Endothelial cell of umbilical vein (primary cell): ENCODE measurements at regions of chr16 and their contacts with region 1.

Region 1: DNA sequence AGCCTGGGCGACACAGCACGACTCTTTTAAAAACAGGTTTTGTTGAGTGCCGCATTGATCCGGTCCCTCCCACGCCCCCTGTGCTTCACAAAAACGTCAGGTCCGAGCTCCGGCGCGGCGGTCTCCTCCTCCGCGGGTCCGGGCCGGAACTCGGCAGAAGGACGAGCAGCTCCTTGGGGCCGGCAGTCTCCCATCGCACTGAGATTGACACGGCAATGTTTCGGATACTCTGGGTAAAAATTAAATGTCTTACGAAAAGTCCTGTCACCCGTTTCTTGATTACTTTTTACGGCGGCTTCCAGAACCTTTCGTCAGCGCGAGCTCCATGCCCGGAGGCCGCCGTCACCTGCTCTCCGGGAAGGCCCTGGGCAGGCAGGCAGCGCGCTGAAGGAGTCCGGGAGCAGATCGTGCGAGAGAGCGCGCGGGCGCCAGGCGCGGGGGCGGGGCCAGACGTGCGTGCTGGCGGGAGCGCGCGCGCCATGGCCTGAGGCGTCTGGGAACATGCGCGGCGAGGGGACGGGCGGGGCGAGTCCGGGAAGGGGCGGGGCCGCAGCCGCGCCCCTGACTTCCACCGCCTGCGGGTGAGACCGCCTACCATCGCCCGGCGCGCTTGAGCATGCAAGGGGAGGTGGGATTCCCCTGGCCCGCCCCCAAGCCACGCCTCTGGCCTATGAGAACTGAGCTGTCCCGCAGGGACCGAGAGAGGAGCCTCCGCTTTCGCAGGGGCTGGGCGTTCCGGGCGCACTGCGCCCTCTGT is 11.7 kb upstream of the SRL start:
- DNase-seq: peak; percentile 99
- H3K4me3 ChIP-seq: peak overlapping the region; percentile 29 to 73 (median 40)
- H3K27ac ChIP-seq: peak overlapping the region; percentile 7
- H3K4me1 ChIP-seq: no peaks in the 10 kb centered on the region
- H3K27me3 ChIP-seq: no peaks in the 10 kb centered on the region
- CTCF ChIP-seq: no peak
- POLR2A ChIP-seq: peak; percentile 83

Region 2: DNA sequence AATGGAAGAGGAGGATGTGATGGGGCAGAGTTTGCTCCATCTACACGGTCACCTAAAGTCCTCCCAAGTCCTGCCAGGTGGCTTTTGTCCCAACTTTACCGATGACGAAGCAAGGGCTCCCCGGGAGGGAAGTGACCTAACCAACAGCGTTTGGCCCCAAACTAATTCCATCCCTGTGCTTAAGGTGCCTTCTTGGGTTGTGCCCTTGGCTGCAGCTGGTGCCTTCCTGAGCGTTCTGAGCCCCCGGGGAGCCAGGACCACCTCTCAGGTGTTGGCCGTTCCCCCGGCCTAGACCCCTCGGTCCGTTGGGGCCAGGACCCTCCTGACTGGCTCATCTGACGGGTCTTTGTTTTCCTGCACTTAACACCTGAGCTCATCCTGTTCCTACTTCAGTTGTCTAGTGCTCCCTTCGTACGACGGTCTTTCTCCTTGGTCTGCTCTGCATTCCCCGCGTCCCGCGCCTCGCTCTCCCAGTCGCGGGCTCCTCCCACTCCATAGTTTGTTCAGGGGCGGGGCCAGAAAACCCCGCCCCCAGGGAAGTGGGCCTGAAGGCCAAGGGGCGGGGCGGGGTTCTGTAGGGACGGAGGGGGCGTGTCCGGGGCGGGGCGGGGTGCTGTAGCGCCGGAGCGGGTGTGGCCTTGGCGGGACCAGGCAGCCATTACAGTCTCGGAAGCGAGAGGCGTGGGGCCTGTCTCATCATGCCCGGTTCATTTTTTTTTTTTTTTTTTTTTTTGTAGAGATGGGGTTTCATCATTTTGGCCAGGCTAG is 1153.7 kb before region 1 on chr16:
- CTCF ChIA-PET with region 1: no interaction called
- POLR2A ChIA-PET with region 1: no interaction called
- dilution Hi-C with region 1: no loop called
- intact Hi-C with region 1: no loop called
- DNase-seq: peak; percentile 81
- H3K4me3 ChIP-seq: no peak overlapping the region
- H3K27ac ChIP-seq: no peak overlapping the region
- H3K4me1 ChIP-seq: peaks cover 26% of the 10 kb centered on the region
- H3K27me3 ChIP-seq: peaks cover 0 to 2% of the 10 kb centered on the region in 2 experiments
- CTCF ChIP-seq: no peak
- POLR2A ChIP-seq: no peak

Region 3: GRCh38 chr16:3938848-3939624 is 314.5 kb before region 1 on chr16:
- CTCF ChIA-PET with region 1: interaction called, 11 read pairs
- POLR2A ChIA-PET with region 1: no interaction called
- dilution Hi-C with region 1: no loop called
- intact Hi-C with region 1: loop called (anchors 1 kb)
- DNase-seq: peak; percentile 55
- H3K4me3 ChIP-seq: peak overlapping the region in 1 of 3 experiments; percentile 29
- H3K27ac ChIP-seq: no peak overlapping the region
- H3K4me1 ChIP-seq: peaks cover 3% of the 10 kb centered on the region
- H3K27me3 ChIP-seq: peaks cover 0 to 2% of the 10 kb centered on the region in 2 experiments
- CTCF ChIP-seq: peak; percentile 90 to 97
- POLR2A ChIP-seq: no peak

Region 4: GRCh38 chr16:4019371-4019791 is 234.2 kb before region 1 on chr16:
- CTCF ChIA-PET with region 1: no interaction called
- POLR2A ChIA-PET with region 1: no interaction called
- dilution Hi-C with region 1: no loop called
- intact Hi-C with region 1: loop called (anchors 10 kb)
- DNase-seq: peak; percentile 40
- H3K4me3 ChIP-seq: peak overlapping the region; percentile 0 to 15 (median 14)
- H3K27ac ChIP-seq: no peak overlapping the region
- H3K4me1 ChIP-seq: peaks cover 3% of the 10 kb centered on the region
- H3K27me3 ChIP-seq: no peaks in the 10 kb centered on the region
- CTCF ChIP-seq: no peak
- POLR2A ChIP-seq: no peak

Region 5: GRCh38 chr16:4183237-4184036 is 70.1 kb before region 1 on chr16:
- CTCF ChIA-PET with region 1: interaction called, 6 read pairs
- POLR2A ChIA-PET with region 1: no interaction called
- dilution Hi-C with region 1: no loop called
- intact Hi-C with region 1: loop called (anchors 1 kb)
- DNase-seq: peak; percentile 96
- H3K4me3 ChIP-seq: peak overlapping the region; percentile 35 to 63 (median 55)
- H3K27ac ChIP-seq: peak overlapping the region; percentile 62
- H3K4me1 ChIP-seq: peaks cover 4% of the 10 kb centered on the region
- H3K27me3 ChIP-seq: no peaks in the 10 kb centered on the region
- CTCF ChIP-seq: no peak
- POLR2A ChIP-seq: no peak

Region 6: GRCh38 chr16:4232541-4233386 is 20.8 kb before region 1 on chr16:
- CTCF ChIA-PET with region 1: interaction called, 12 read pairs
- POLR2A ChIA-PET with region 1: no interaction called
- dilution Hi-C with region 1: no loop called
- intact Hi-C with region 1: no loop called
- DNase-seq: no peak
- H3K4me3 ChIP-seq: no peak overlapping the region
- H3K27ac ChIP-seq: no peak overlapping the region
- H3K4me1 ChIP-seq: no peaks in the 10 kb centered on the region
- H3K27me3 ChIP-seq: no peaks in the 10 kb centered on the region
- CTCF ChIP-seq: no peak
- POLR2A ChIP-seq: no peak

Region 7: GRCh38 chr16:4271176-4272066 is 17.8 kb after region 1 on chr16:
- CTCF ChIA-PET with region 1: interaction called, 39 read pairs
- POLR2A ChIA-PET with region 1: no interaction called
- dilution Hi-C with region 1: no loop called
- intact Hi-C with region 1: loop called (anchors 1 kb)
- DNase-seq: peak; percentile 89
- H3K4me3 ChIP-seq: peak overlapping the region; percentile 58 to 89 (median 68)
- H3K27ac ChIP-seq: peak overlapping the region; percentile 51
- H3K4me1 ChIP-seq: peaks cover 15% of the 10 kb centered on the region
- H3K27me3 ChIP-seq: no peaks in the 10 kb centered on the region
- CTCF ChIP-seq: no peak
- POLR2A ChIP-seq: peak; percentile 55

Region 8: GRCh38 chr16:4330277-4330874 is 76.8 kb after region 1 on chr16:
- CTCF ChIA-PET with region 1: interaction called, 26 read pairs
- POLR2A ChIA-PET with region 1: no interaction called
- dilution Hi-C with region 1: no loop called
- intact Hi-C with region 1: loop called (anchors 1 kb)
- DNase-seq: peak; percentile 58
- H3K4me3 ChIP-seq: no peak overlapping the region
- H3K27ac ChIP-seq: no peak overlapping the region
- H3K4me1 ChIP-seq: peaks cover 23% of the 10 kb centered on the region
- H3K27me3 ChIP-seq: no peaks in the 10 kb centered on the region
- CTCF ChIP-seq: peak; percentile 97 to 99
- POLR2A ChIP-seq: no peak